HCT116 (cell line): ENCODE measurements at regions of chr11 and their contacts with region 1.

Region 1: DNA sequence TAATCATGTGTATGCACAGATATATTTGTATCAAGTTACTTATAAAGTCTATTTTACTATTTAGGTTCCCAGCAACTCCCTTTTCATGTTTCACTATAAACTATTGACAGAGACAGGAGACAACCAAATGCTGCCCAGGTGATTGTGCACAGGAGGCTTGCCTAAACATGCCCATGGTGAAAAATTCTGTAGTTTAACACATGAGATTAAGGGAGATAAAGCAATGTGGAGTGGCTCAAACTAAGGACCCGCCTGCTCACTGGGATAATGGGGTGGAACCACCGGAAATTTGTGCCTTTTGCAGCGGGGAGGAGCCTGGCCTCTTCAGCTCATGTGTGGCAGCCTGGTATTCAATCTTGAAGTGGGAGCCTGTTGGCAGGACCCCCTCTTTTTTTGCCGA is 459.5 kb upstream of the CNTN5 start:
- DNase-seq: no peak
- ATAC-seq: no peak
- H3K4me3 ChIP-seq: no peak overlapping the region
- H3K27ac ChIP-seq: no peak overlapping the region
- H3K4me1 ChIP-seq: no peaks in the 10 kb centered on the region
- H3K27me3 ChIP-seq: no peaks in the 10 kb centered on the region
- CTCF ChIP-seq: no peak
- POLR2A ChIP-seq: no peak
- RAD21 ChIP-seq: no peak

Region 2: DNA sequence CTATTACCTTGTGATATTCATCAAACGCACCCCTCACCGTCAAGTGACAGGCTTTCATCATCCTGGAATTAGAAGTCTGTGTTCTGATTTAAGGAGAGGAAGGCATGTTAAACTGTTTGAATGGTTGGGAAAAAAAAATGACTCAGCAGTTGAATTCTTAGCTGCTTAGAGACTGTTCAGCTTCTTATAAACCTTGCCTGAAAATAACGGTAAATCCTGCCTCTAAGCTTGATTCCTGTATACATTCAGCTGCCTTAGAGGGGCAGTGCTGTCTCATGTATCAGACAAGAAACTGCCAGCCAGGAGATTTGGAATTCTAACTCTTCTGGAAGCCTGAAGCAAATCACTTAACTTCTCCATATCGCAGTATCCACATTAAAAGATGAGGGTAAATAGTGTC is 1734.1 kb before region 1 on chr11:
- CTCF ChIA-PET with region 1: no interaction called
- POLR2A ChIA-PET with region 1: no interaction called
- RAD21 ChIA-PET with region 1: no interaction called
- intact Hi-C with region 1: loop called (anchors 5 kb)
- DNase-seq: no peak
- ATAC-seq: no peak
- H3K4me3 ChIP-seq: no peak overlapping the region
- H3K27ac ChIP-seq: no peak overlapping the region
- H3K4me1 ChIP-seq: no peaks in the 10 kb centered on the region
- H3K27me3 ChIP-seq: no peaks in the 10 kb centered on the region
- CTCF ChIP-seq: no peak
- POLR2A ChIP-seq: no peak
- RAD21 ChIP-seq: no peak